MCF 10A (cell line): ENCODE measurements at regions of chr2 and their contacts with region 1.

Region 1: GRCh38 chr2:26244309-26245121 is at the starts of genes HADHA and HADHB:
- DNase-seq: peak; percentile 92
- H3K4me3 Mint-ChIP-seq: peak within 1 kb of the TSS; percentile 97
- H3K27ac Mint-ChIP-seq: peak within 1 kb of the TSS; percentile 99
- H3K4me1 Mint-ChIP-seq: peaks cover 24% of the 10 kb centered on the region
- H3K27me3 Mint-ChIP-seq: no peaks in the 10 kb centered on the region
- CTCF ChIP-seq: no peak
- total RNA-seq, gene HADHA: 132 and 152 TPM in 2 replicates
- total RNA-seq, gene HADHB: 126 and 143 TPM in 2 replicates

Region 2: DNA sequence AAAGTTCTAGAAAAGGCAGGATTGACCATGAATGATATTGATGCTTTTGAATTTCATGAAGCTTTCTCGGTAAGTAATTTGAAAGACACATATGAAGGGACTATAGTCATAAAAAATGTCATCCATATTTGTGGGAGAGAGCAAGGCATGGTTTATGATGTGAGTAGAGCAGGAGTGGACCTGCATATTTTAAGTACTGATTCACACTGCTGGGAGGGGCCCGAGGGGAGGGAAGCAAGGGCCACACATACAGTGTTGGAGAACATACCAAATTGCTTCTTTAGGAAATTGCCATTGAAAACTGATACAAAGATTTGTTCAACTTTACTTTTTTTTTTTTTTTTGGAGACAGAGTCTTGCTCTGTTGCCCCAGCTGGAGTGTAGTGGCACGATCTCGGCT is 39.6 kb after region 1 on chr2:
- CTCF ChIA-PET with region 1: interaction called, 4 read pairs
- POLR2A ChIA-PET with region 1: interaction called, 93 read pairs
- intact Hi-C with region 1: no loop called
- DNase-seq: peak; percentile 64
- H3K4me3 Mint-ChIP-seq: peak overlapping the region; percentile 22
- H3K27ac Mint-ChIP-seq: peak overlapping the region; percentile 47
- H3K4me1 Mint-ChIP-seq: peaks cover 20% of the 10 kb centered on the region
- H3K27me3 Mint-ChIP-seq: no peaks in the 10 kb centered on the region
- CTCF ChIP-seq: no peak

Region 3: DNA sequence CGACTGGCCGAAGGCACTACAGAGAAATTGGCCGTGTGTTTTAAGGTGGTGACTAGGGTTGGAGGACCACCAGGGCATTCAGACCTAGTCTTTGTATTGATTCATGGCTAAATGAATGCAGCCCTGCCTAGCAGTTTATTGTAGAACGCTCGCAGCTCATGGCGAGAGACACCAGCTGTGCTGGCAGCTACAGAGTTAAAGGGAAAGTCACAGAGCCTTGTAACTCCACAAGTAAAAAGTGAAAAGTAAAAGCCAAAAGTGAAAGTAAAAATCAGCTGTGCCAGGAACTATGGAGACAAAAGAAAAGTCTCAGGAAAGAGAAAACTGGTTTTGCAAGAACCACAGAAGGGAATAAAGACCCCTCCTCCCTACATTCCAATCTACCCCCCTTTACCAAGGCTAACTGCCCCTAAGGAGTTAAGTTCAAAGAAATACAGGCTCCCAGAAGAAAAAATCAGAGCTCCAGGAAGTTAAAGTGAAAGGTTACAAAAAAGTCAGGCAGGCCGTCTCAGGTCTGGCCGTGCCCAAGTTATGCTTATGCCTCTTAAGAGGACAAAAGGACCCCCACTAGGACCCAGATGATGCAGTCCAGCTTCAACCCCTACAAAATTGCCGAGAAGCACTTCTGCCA is 55.1 kb after region 1 on chr2:
- CTCF ChIA-PET with region 1: interaction called, 8 read pairs
- POLR2A ChIA-PET with region 1: interaction called, 177 read pairs
- intact Hi-C with region 1: loop called (anchors 2 kb)
- DNase-seq: peak; percentile 52
- H3K4me3 Mint-ChIP-seq: no peak overlapping the region
- H3K27ac Mint-ChIP-seq: no peak overlapping the region
- H3K4me1 Mint-ChIP-seq: peaks cover 13% of the 10 kb centered on the region
- H3K27me3 Mint-ChIP-seq: no peaks in the 10 kb centered on the region
- CTCF ChIP-seq: no peak

Region 4: GRCh38 chr2:26345545-26346453 is 101.3 kb after region 1 on chr2 and contains the start of gene SELENOI:
- CTCF ChIA-PET with region 1: interaction called, 6 read pairs
- POLR2A ChIA-PET with region 1: interaction called, 272 read pairs
- intact Hi-C with region 1: loop called (anchors 5 kb)
- DNase-seq: peak; percentile 99
- H3K4me3 Mint-ChIP-seq: peak within 1 kb of the TSS; percentile 96
- H3K27ac Mint-ChIP-seq: peak within 1 kb of the TSS; percentile 97
- H3K4me1 Mint-ChIP-seq: peaks cover 17% of the 10 kb centered on the region
- H3K27me3 Mint-ChIP-seq: no peaks in the 10 kb centered on the region
- CTCF ChIP-seq: no peak
- total RNA-seq, gene SELENOI: 43.8 and 51.0 TPM in 2 replicates

Region 5: DNA sequence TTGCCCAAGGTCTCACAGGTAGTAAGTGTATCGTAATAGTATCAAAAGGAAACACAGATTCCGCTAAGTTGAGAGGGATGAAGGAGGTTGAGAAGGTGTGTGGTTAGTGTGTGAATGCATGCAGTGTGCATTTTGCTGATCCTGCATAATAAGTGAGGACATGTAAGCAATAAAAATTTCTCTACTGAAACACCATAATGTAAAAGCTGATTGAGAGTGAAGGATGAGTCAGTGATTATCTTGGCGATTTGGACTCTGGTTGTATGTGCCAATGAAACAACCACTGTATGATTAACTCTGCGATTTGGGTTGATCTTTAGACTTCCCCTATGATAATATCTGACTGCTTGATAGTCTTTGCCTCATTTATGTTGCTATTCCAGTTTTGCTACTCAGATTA is 118.8 kb after region 1 on chr2:
- CTCF ChIA-PET with region 1: no interaction called
- POLR2A ChIA-PET with region 1: interaction called, 11 read pairs
- intact Hi-C with region 1: no loop called
- DNase-seq: peak; percentile 50
- H3K4me3 Mint-ChIP-seq: peak overlapping the region; percentile 3
- H3K27ac Mint-ChIP-seq: peak overlapping the region; percentile 9
- H3K4me1 Mint-ChIP-seq: peaks cover 21% of the 10 kb centered on the region
- H3K27me3 Mint-ChIP-seq: no peaks in the 10 kb centered on the region
- CTCF ChIP-seq: no peak

Region 6: GRCh38 chr2:26395394-26395793 is 150.9 kb after region 1 on chr2:
- CTCF ChIA-PET with region 1: no interaction called
- POLR2A ChIA-PET with region 1: no interaction called
- intact Hi-C with region 1: no loop called
- DNase-seq: no peak
- H3K4me3 Mint-ChIP-seq: no peak overlapping the region
- H3K27ac Mint-ChIP-seq: no peak overlapping the region
- H3K4me1 Mint-ChIP-seq: peaks cover 8% of the 10 kb centered on the region
- H3K27me3 Mint-ChIP-seq: no peaks in the 10 kb centered on the region
- CTCF ChIP-seq: no peak